ENCODE measurements at regions of chr11 and their contacts with region 1.

Region 1: GRCh38 chr11:36702330-36703055 is 104.5 kb upstream of the RAG2 start:
- DNase-seq: no peak
- H3K4me3 ChIP-seq: no peak overlapping the region
- H3K27ac ChIP-seq: no peak overlapping the region
- H3K4me1 ChIP-seq: peaks cover 0 to 12% (median 0%) of the 10 kb centered on the region in 4 donors
- H3K27me3 ChIP-seq: no peaks in the 10 kb centered on the region
- CTCF ChIP-seq: peak; percentile 57 to 80 (median 74)
- EP300 ChIP-seq: no peak
- POLR2A ChIP-seq: no peak

Region 2: GRCh38 chr11:36741515-36741914 is 39.0 kb after region 1 on chr11:
- in situ Hi-C with region 1: no loop called
- intact Hi-C with region 1: loop called (anchors 1 kb)
- DNase-seq: no peak
- H3K4me3 ChIP-seq: no peak overlapping the region
- H3K27ac ChIP-seq: no peak overlapping the region
- H3K4me1 ChIP-seq: no peaks in the 10 kb centered on the region
- H3K27me3 ChIP-seq: no peaks in the 10 kb centered on the region
- CTCF ChIP-seq: no peak
- EP300 ChIP-seq: no peak
- POLR2A ChIP-seq: no peak

Region 3: DNA sequence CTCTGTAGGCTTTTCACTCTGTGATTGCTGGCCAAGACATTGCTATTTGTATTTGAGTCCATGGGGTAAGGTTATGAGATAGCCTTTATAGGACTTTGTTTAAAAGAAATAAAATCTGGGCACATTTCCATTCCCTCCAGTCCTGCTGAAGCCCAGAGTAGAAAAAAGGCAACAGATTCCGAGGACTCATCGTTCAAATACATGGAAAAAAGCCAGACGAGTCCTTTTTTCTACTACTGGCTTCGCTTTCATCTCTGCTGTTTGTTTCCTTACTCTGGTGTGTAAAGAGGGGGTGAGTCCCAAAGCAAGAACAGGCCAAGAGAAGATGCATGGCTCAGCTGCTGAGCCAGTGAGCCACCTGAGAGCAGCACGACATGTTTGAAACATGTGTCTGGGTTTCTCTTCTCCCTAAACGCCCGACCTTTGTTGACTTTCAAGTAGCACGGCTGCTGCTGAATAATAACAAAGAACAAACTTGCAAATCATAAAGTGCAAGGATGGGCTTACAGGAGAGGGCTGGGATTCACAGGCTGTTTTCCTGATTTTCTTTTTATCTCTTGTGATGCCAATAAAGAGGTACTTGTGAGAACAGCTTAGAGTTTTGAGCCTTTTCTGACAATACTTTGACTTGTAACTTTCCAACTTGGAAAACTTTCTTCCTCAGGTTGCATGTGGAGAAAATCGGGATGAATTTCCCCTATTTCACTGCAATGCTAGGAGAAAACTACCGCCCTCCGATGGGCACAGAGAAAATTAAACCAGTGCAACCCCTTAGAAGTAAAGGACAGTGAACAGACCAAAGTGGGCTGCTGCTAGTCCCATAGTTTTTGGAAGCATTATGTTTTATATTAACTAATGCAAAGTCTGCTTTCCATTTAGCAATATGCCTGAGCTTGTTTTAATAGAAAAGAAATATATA is 90.8 kb after region 1 on chr11:
- in situ Hi-C with region 1: no loop called
- intact Hi-C with region 1: no loop called
- DNase-seq: no peak
- H3K4me3 ChIP-seq: no peak overlapping the region
- H3K27ac ChIP-seq: no peak overlapping the region
- H3K4me1 ChIP-seq: peaks cover 0 to 12% (median 3%) of the 10 kb centered on the region in 4 donors
- H3K27me3 ChIP-seq: no peaks in the 10 kb centered on the region
- CTCF ChIP-seq: no peak
- EP300 ChIP-seq: no peak
- POLR2A ChIP-seq: no peak

Measured in transverse colon (tissue), 4 donors.